ENCODE measurements at regions of chr1 and their contacts with region 1.

Region 1: GRCh38 chr1:39196244-39197215 is 8.0 kb upstream of the MACF1 start:
- DNase-seq: no peak
- H3K4me3 ChIP-seq: no peak overlapping the region
- H3K27ac ChIP-seq: 0 out of 2 replicates have a peak overlapping the region, but pooled peaks have one; percentile 29
- H3K4me1 ChIP-seq: peaks cover 47% of the 10 kb centered on the region
- H3K27me3 ChIP-seq: no peaks in the 10 kb centered on the region
- CTCF ChIP-seq: no peak

Region 2: GRCh38 chr1:38929476-38929875 is 267.1 kb before region 1 on chr1:
- CTCF ChIA-PET with region 1: no interaction called
- POLR2A ChIA-PET with region 1: no interaction called
- intact Hi-C with region 1: no loop called
- DNase-seq: no peak
- H3K4me3 ChIP-seq: no peak overlapping the region
- H3K27ac ChIP-seq: no peak overlapping the region
- H3K4me1 ChIP-seq: no peaks in the 10 kb centered on the region
- H3K27me3 ChIP-seq: no peaks in the 10 kb centered on the region
- CTCF ChIP-seq: no peak

Region 3: GRCh38 chr1:39110325-39110851 is 86.1 kb before region 1 on chr1:
- CTCF ChIA-PET with region 1: interaction called, 13 read pairs
- POLR2A ChIA-PET with region 1: interaction called, 13 read pairs
- intact Hi-C with region 1: no loop called
- DNase-seq: no peak
- H3K4me3 ChIP-seq: peak overlapping the region; percentile 3; the same call in 1 of the 2 replicates
- H3K27ac ChIP-seq: peak overlapping the region; percentile 75
- H3K4me1 ChIP-seq: peaks cover 56% of the 10 kb centered on the region
- H3K27me3 ChIP-seq: no peaks in the 10 kb centered on the region
- CTCF ChIP-seq: no peak

Region 4: GRCh38 chr1:39158327-39159086 is 38.0 kb before region 1 on chr1:
- CTCF ChIA-PET with region 1: interaction called, 13 read pairs
- POLR2A ChIA-PET with region 1: no interaction called
- intact Hi-C with region 1: no loop called
- DNase-seq: peak; percentile 42 to 58
- H3K4me3 ChIP-seq: no peak overlapping the region
- H3K27ac ChIP-seq: peak overlapping the region; percentile 59
- H3K4me1 ChIP-seq: peaks cover 67% of the 10 kb centered on the region
- H3K27me3 ChIP-seq: no peaks in the 10 kb centered on the region
- CTCF ChIP-seq: no peak

Region 5: DNA sequence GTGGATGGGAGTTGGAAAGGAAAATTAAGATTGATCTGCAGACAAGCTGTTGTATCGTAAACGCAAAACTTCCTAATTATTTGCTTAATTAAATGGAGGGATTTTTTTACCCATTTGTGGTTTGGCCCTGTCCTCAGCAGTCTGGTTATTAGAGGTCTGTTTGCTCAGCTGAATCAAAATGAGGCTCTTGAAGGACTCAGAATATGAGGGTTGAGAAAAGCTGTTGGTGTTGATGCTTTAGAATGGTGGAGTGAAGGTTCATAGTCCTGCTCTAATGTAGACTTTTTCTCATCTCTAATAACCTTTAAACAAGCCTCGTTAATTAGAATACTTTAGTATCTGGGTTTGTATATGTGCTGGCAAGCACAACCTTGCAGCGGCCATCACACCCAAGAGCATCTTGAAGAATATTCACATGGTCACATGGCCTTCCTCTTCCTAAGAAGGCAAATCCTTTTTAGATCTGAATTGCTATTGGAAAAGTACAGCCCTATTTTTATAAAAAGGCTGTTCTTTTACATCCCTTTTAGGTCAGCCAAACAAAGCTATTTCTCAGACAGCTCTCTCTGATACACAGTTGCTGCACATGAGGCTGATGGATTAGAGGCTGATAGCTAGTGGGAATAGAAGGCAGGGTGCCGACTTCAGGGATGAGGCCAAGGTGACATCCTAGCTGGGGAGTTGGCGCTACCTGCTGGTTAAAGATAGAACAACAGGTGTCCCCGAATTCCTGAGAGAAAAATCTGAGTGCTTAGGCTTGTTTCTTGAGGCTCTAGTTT is 61.8 kb after region 1 on chr1:
- CTCF ChIA-PET with region 1: interaction called, 49 read pairs
- POLR2A ChIA-PET with region 1: interaction called, 11 read pairs
- intact Hi-C with region 1: loop called (anchors 1 kb)
- DNase-seq: peak; percentile 47 to 78
- H3K4me3 ChIP-seq: no peak overlapping the region
- H3K27ac ChIP-seq: no peak overlapping the region
- H3K4me1 ChIP-seq: 0 out of 2 replicates have a peak, but pooled peaks cover 5% of the 10 kb centered on the region
- H3K27me3 ChIP-seq: no peaks in the 10 kb centered on the region
- CTCF ChIP-seq: peak; percentile 94

Region 6: GRCh38 chr1:39575191-39576015 is 378.9 kb after region 1 on chr1:
- CTCF ChIA-PET with region 1: interaction called, 10 read pairs
- POLR2A ChIA-PET with region 1: no interaction called
- intact Hi-C with region 1: no loop called
- DNase-seq: peak in 1 of 2 experiments; percentile 33
- H3K4me3 ChIP-seq: peak overlapping the region; percentile 76
- H3K27ac ChIP-seq: 0 out of 2 replicates have a peak overlapping the region, but pooled peaks have one; percentile 39
- H3K4me1 ChIP-seq: peaks cover 26% of the 10 kb centered on the region
- H3K27me3 ChIP-seq: no peaks in the 10 kb centered on the region
- CTCF ChIP-seq: no peak

Measured in PC-9 (cell line).